ENCODE measurements at regions of chr17 and their contacts with region 1.

Region 1: GRCh38 chr17:77963441-77963840 is 4.9 kb downstream of the TNRC6C start:
- DNase-seq: peak; percentile 68 to 84 (median 75)
- H3K4me3 ChIP-seq: no peak overlapping the region
- H3K4me3 Mint-ChIP-seq: peak overlapping the region; percentile 72 to 85 (median 81)
- H3K27ac ChIP-seq: no peak overlapping the region
- H3K27ac Mint-ChIP-seq: peak overlapping the region; percentile 3 to 86 (median 65)
- H3K4me1 ChIP-seq: peaks cover 73% of the 10 kb centered on the region
- H3K4me1 Mint-ChIP-seq: peaks cover 56 to 85% (median 75%) of the 10 kb centered on the region in 4 donors
- H3K27me3 ChIP-seq: no peaks in the 10 kb centered on the region
- H3K27me3 Mint-ChIP-seq: no peaks in the 10 kb centered on the region

Region 2: DNA sequence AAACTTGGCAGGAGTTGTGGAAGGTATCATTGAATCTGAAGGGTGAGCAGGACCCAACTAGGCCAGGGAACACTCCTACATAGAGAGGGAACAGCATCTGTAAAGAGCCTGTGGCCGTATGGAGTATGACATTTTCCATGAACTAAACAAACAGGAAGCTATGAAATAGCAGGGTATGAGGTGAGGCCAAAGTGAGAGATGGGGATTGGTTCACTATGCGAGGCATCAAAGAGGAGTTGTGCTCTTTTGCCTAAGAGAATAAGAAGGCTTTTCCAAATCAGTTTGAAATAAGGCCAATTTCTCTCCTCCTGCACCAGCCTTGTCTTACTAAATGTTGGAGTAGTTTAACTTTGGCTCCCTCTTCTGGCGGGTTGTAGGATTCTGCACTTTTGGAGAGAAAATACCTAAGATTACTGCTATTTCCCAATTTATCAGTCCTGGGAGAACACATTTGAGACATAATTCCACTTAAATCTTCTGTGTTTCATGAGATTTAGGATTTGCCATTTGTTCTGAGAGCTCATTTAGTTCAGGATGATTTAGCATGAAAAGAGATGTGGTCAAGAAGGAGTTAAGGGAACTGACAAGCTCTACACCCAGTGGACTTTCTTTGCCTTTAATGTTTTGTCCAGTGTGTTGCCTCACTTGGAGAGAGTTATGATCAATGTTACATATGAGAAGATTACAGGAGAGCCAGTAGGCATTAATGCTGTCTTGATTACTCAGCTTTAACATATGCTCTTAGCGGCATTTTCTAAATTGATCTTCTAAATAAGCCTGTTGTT is 50.4 kb after region 1 on chr17:
- CTCF ChIA-PET with region 1: interaction called, 19 read pairs
- POLR2A ChIA-PET with region 1: interaction called, 63 read pairs
- intact Hi-C with region 1: loop called (anchors 5 kb)
- DNase-seq: peak; percentile 54 to 62 (median 60)
- H3K4me3 ChIP-seq: no peak overlapping the region
- H3K4me3 Mint-ChIP-seq: no peak overlapping the region
- H3K27ac ChIP-seq: no peak overlapping the region
- H3K27ac Mint-ChIP-seq: peak overlapping the region; percentile 3 to 65 (median 30)
- H3K4me1 ChIP-seq: peaks cover 11% of the 10 kb centered on the region
- H3K4me1 Mint-ChIP-seq: peaks cover 21 to 44% (median 29%) of the 10 kb centered on the region in 4 donors
- H3K27me3 ChIP-seq: no peaks in the 10 kb centered on the region
- H3K27me3 Mint-ChIP-seq: no peaks in the 10 kb centered on the region

Region 3: DNA sequence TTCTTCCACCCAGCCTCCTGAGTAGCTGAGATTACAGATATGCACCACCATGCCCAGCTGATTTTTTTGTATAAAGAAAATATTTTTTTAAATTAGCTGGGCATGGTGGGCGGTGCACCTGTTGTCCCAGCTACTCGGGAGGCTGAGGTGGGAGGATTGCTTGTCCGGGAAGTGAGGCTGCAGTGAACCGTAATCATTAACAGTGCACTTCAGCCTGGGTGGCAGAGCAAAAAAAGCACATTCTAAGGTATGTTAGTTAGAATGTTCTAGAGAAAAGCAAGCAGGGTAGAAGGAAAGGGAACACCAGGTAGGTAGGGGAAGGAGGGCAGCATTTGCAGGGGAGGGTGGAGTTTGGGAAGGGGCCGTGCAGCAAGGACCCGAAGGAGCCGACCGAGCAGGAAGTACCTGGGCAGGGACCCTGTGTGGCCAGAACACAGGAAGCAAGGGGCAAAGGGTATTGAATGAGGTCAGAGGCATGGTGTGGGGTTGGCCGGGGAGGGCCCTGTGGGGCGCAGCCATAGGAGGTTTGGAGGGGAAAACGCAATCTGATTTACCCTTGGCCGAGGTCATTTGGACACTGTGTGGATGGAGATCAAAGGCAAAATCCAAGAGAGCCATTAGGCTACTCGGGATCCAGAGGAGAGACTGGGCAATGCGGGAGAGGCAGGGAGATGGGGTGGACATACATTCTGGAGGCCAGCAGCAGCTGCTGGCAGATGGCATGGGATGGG is 185.0 kb after region 1 on chr17:
- CTCF ChIA-PET with region 1: no interaction called
- POLR2A ChIA-PET with region 1: no interaction called
- intact Hi-C with region 1: no loop called
- DNase-seq: no peak
- H3K4me3 ChIP-seq: no peak overlapping the region
- H3K4me3 Mint-ChIP-seq: no peak overlapping the region
- H3K27ac ChIP-seq: no peak overlapping the region
- H3K27ac Mint-ChIP-seq: peak overlapping the region in 3 of 7 donors; percentile 23 to 84 (median 57)
- H3K4me1 ChIP-seq: peaks cover 26% of the 10 kb centered on the region
- H3K4me1 Mint-ChIP-seq: peaks cover 2 to 20% (median 13%) of the 10 kb centered on the region in 4 donors
- H3K27me3 ChIP-seq: no peaks in the 10 kb centered on the region
- H3K27me3 Mint-ChIP-seq: no peaks in the 10 kb centered on the region